ENCODE measurements at regions of chr13 and their contacts with region 1.

Region 1: DNA sequence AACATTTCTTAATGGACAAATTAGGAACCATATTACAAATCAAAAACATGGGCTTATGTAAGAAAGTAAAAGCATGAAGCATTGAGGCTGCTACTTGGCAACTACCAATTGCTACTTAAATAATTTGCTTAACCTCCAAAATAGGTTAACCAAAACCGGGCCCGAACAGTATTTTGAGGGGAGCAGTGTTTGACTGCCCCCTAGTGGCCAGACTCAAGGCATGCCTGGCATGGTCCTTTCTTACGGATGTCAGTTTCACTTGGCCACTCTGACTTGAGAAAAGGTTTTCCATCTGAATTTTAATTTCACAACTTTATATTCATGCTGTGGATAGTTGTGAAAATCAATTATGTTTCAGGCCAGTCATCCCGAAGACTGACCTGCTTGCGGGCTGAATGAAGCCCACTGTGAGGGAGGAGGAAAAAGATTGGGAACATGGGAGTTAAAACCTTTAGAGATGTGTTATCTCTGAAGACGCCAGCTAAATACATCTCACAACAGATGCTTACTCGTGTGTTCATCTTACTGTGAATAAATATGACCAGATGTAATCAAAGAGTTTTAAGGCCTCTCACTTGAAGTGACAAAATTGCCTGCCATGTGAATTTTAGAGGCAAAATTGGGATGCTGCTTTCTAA is 2.9 kb downstream of the RXFP2 start:
- DNase-seq: peak; percentile 64
- H3K4me3 ChIP-seq: no peak overlapping the region
- H3K27ac ChIP-seq: no peak overlapping the region
- H3K4me1 ChIP-seq: no peaks in the 10 kb centered on the region
- CTCF ChIP-seq: peak; percentile 98

Region 2: GRCh38 chr13:31431722-31432137 is 310.5 kb before region 1 on chr13:
- CTCF ChIA-PET with region 1: no interaction called
- POLR2A ChIA-PET with region 1: interaction called, 3 read pairs
- intact Hi-C with region 1: loop called (anchors 1 kb)
- DNase-seq: peak; percentile 56
- H3K4me3 ChIP-seq: no peak overlapping the region
- H3K27ac ChIP-seq: no peak overlapping the region
- H3K4me1 ChIP-seq: no peaks in the 10 kb centered on the region
- CTCF ChIP-seq: peak; percentile 76

Region 3: GRCh38 chr13:31797154-31797775 is 55.0 kb after region 1 on chr13:
- CTCF ChIA-PET with region 1: no interaction called
- POLR2A ChIA-PET with region 1: no interaction called
- intact Hi-C with region 1: no loop called
- DNase-seq: no peak
- H3K4me3 ChIP-seq: no peak overlapping the region
- H3K27ac ChIP-seq: no peak overlapping the region
- H3K4me1 ChIP-seq: no peaks in the 10 kb centered on the region
- CTCF ChIP-seq: peak; percentile 50

Region 4: DNA sequence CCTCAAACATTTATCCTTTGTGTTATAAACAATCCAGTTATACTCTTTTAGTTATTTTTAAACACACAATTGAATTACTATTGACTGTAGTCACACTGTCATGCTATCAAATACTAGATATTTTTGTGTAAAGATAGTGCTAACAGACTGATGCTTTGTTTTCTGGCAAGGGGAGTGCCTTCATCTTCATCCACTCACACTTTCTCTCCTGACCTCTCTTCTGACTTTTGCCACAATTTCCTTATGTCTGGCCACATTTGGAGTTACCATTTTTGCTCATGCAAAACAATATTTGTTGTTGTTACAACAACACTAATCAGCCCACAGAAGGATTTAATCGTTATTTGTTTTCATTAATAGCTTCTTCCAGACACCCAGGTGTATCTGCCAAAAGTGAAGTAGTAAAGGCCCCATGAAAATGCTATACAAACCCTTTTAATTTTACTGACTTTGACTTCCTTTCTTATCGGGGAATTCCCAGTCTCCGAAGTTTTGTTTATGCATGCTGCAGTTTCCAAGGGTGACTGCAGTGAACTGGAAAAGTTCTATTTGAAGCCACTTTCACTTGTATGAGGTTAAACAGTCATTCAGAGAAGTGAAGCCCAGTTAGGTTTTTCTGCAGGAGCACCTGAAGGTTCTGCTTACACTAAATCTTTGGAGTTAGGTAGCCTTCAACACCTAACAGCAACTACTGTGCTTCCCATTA is 223.3 kb after region 1 on chr13:
- CTCF ChIA-PET with region 1: no interaction called
- POLR2A ChIA-PET with region 1: no interaction called
- intact Hi-C with region 1: no loop called
- DNase-seq: no peak
- H3K4me3 ChIP-seq: no peak overlapping the region
- H3K27ac ChIP-seq: no peak overlapping the region
- H3K4me1 ChIP-seq: no peaks in the 10 kb centered on the region
- CTCF ChIP-seq: no peak

Measured in OCI-LY7 (cell line).